ENCODE measurements at regions of chr12 and their contacts with region 1.

Region 1: DNA sequence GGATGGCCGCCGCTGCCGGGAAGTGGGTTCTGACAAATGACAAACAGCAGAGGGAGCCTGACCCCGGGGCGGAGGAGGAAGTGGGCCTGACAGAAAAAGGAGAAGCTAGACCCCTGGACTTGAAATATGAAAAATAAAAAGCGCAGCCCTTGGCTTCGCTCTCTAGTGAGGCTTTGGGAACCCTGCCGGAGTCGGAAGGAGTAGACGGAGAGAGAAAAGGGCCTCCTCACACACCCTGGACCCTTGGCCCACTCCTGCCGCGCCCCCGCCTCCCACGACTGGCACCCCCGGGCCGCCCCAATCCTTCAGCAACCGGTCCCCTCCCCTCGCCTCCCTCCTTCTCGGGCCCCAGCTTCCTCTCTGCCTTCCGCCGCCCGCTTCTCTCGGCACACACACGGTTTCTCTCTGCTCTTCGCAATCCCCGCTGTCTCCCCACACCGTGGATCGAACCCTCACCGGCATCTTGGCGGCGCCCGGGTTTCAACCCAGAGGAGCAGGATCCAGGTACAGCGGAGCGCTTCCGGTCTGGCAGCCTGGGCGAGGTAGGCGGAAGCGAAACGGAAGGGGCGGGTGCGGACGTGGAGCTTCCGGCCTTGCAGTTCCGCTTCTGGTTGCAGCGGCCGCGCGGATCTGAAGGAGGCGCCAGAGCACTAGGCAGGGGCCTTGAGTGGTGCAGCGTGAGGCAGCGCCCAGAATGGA is at the start of gene ARPC3:
- DNase-seq: peak; percentile 92
- ATAC-seq: peak; percentile 98
- H3K4me3 ChIP-seq: peak within 1 kb of the TSS; percentile 74
- H3K27ac ChIP-seq: peak within 1 kb of the TSS; percentile 97
- H3K4me1 ChIP-seq: 0 out of 2 replicates have a peak, but pooled peaks cover 5% of the 10 kb centered on the region
- H3K27me3 ChIP-seq: no peaks in the 10 kb centered on the region
- CTCF ChIP-seq: peak; percentile 97
- POLR2A ChIP-seq: peak; percentile 82
- RAD21 ChIP-seq: peak; percentile 97
- total RNA-seq, gene ARPC3: 204 and 234 TPM in 2 replicates

Region 2: GRCh38 chr12:109497675-109498074 is 952.3 kb before region 1 on chr12:
- CTCF ChIA-PET with region 1: no interaction called
- POLR2A ChIA-PET with region 1: no interaction called
- dilution Hi-C with region 1: no loop called
- in situ Hi-C with region 1: no loop called
- intact Hi-C with region 1: no loop called
- DNase-seq: peak; percentile 79
- ATAC-seq: peak; percentile 67
- H3K4me3 ChIP-seq: no peak overlapping the region
- H3K27ac ChIP-seq: no peak overlapping the region
- H3K4me1 ChIP-seq: no peaks in the 10 kb centered on the region
- H3K27me3 ChIP-seq: no peaks in the 10 kb centered on the region
- CTCF ChIP-seq: no peak
- POLR2A ChIP-seq: no peak
- RAD21 ChIP-seq: no peak

Region 3: GRCh38 chr12:110065540-110065939 is 384.4 kb before region 1 on chr12:
- CTCF ChIA-PET with region 1: no interaction called
- POLR2A ChIA-PET with region 1: interaction called, 13 read pairs
- dilution Hi-C with region 1: no loop called
- in situ Hi-C with region 1: no loop called
- intact Hi-C with region 1: no loop called
- DNase-seq: no peak
- ATAC-seq: no peak
- H3K4me3 ChIP-seq: no peak overlapping the region
- H3K27ac ChIP-seq: no peak overlapping the region
- H3K4me1 ChIP-seq: peaks cover under 1% of the 10 kb centered on the region; the same call in 1 of the 2 replicates
- H3K27me3 ChIP-seq: no peaks in the 10 kb centered on the region
- CTCF ChIP-seq: no peak
- POLR2A ChIP-seq: no peak
- RAD21 ChIP-seq: no peak

Region 4: GRCh38 chr12:110075880-110076279 is 374.1 kb before region 1 on chr12:
- CTCF ChIA-PET with region 1: no interaction called
- POLR2A ChIA-PET with region 1: no interaction called
- dilution Hi-C with region 1: no loop called
- in situ Hi-C with region 1: no loop called
- intact Hi-C with region 1: no loop called
- DNase-seq: no peak
- ATAC-seq: no peak
- H3K4me3 ChIP-seq: no peak overlapping the region
- H3K27ac ChIP-seq: no peak overlapping the region
- H3K4me1 ChIP-seq: 0 out of 2 replicates have a peak, but pooled peaks cover 2% of the 10 kb centered on the region
- H3K27me3 ChIP-seq: no peaks in the 10 kb centered on the region
- CTCF ChIP-seq: no peak
- POLR2A ChIP-seq: no peak
- RAD21 ChIP-seq: no peak

Region 5: DNA sequence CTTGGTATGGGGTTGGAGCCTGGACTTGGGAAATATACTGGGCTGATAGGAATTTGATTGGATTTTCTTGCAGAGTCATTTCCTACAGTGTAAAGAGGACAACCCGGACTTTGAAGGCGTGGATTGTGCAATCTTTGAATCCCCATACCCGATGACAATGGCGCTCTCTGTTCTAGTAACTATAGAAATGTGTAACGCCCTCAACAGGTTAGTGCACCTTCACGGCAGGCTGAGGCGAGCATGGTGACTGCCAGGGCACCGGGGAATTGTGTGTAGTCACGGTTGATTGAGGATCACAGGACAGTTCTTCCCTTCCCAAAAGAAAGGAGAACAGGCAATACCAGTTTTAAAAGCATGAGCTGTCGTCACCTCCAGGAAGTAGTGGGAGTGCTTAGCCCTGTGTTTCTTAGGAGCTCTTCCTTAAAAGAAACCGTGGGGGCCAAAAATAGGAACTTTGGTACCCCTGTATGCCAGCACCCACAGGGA is 104.7 kb before region 1 on chr12:
- CTCF ChIA-PET with region 1: no interaction called
- POLR2A ChIA-PET with region 1: no interaction called
- dilution Hi-C with region 1: no loop called
- in situ Hi-C with region 1: no loop called
- intact Hi-C with region 1: no loop called
- DNase-seq: no peak
- ATAC-seq: no peak
- H3K4me3 ChIP-seq: no peak overlapping the region
- H3K27ac ChIP-seq: no peak overlapping the region
- H3K4me1 ChIP-seq: no peaks in the 10 kb centered on the region
- H3K27me3 ChIP-seq: no peaks in the 10 kb centered on the region
- CTCF ChIP-seq: no peak
- POLR2A ChIP-seq: no peak
- RAD21 ChIP-seq: no peak

Region 6: GRCh38 chr12:110468212-110469048 is 18.5 kb after region 1 on chr12 and contains the starts of genes FAM216A and GPN3:
- CTCF ChIA-PET with region 1: interaction called, 15 read pairs
- POLR2A ChIA-PET with region 1: interaction called, 4 read pairs
- dilution Hi-C with region 1: no loop called
- in situ Hi-C with region 1: no loop called
- intact Hi-C with region 1: loop called (anchors 1 kb)
- DNase-seq: peak; percentile 98
- ATAC-seq: peak; percentile 90
- H3K4me3 ChIP-seq: peak within 1 kb of the TSS; percentile 53
- H3K27ac ChIP-seq: peak within 1 kb of the TSS; percentile 86
- H3K4me1 ChIP-seq: peaks cover 3% of the 10 kb centered on the region; the same call in 1 of the 2 replicates
- H3K27me3 ChIP-seq: no peaks in the 10 kb centered on the region
- CTCF ChIP-seq: no peak
- POLR2A ChIP-seq: peak; percentile 83
- RAD21 ChIP-seq: no peak
- total RNA-seq, gene FAM216A: 14.0 and 18.9 TPM in 2 replicates
- total RNA-seq, gene GPN3: 7.7 and 24.7 TPM in 2 replicates

Region 7: DNA sequence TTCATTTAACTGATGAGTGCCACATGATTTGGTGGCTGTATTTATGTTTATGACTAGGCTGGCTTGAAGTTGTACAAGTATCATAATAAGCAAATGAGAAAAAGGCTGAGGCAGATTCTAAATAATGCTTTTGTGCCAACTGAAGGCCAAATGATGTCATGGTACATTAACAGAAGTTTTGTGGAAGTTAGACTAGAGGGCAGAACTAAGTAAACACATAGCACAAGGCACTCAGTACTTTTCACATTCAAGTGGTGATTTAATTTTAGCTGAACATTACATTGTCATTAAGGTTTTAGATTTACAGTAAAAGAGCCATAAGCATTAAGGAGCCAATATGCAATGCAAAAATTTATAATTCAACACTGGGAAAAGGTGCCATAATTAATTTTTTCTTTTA is 271.6 kb after region 1 on chr12:
- CTCF ChIA-PET with region 1: interaction called, 3 read pairs
- POLR2A ChIA-PET with region 1: no interaction called
- dilution Hi-C with region 1: no loop called
- in situ Hi-C with region 1: no loop called
- intact Hi-C with region 1: loop called (anchors 10 kb)
- DNase-seq: no peak
- ATAC-seq: no peak
- H3K4me3 ChIP-seq: no peak overlapping the region
- H3K27ac ChIP-seq: no peak overlapping the region
- H3K4me1 ChIP-seq: no peaks in the 10 kb centered on the region
- H3K27me3 ChIP-seq: no peaks in the 10 kb centered on the region
- CTCF ChIP-seq: no peak
- POLR2A ChIP-seq: no peak
- RAD21 ChIP-seq: no peak

Region 8: DNA sequence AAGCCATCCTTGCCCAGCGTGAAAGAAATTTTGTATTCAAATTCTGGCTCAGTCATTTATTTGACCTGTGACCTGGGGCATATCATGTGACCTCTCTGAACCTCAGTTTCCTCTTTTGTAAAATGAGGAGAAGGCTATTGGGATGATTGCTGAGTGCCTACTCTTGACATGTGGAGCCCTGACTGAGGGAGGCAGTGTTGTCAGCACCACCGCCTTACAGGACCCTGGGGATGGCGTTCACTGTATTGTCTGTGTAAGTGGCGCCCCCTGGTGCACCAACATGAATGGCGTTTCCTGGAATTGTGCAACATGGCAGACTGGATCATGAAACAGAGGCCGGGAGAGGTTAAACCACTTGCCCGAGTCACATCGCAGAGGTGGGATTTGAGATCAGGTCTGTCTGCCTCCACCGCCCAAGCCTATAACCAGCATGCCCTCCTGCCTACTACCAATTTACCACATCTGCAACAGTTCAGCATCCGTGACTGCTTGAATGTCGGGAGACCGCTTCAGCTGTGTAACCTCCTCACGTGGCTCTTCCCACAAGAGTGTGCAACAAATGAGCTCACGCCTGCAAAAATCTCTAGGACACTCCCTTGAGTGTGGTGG is 376.7 kb after region 1 on chr12:
- CTCF ChIA-PET with region 1: no interaction called
- POLR2A ChIA-PET with region 1: no interaction called
- dilution Hi-C with region 1: no loop called
- in situ Hi-C with region 1: no loop called
- intact Hi-C with region 1: loop called (anchors 1 kb)
- DNase-seq: peak; percentile 72
- ATAC-seq: peak; percentile 93
- H3K4me3 ChIP-seq: no peak overlapping the region
- H3K27ac ChIP-seq: no peak overlapping the region
- H3K4me1 ChIP-seq: no peaks in the 10 kb centered on the region
- H3K27me3 ChIP-seq: peaks cover 9% of the 10 kb centered on the region
- CTCF ChIP-seq: peak; percentile 75
- POLR2A ChIP-seq: no peak
- RAD21 ChIP-seq: peak; percentile 71

Region 9: DNA sequence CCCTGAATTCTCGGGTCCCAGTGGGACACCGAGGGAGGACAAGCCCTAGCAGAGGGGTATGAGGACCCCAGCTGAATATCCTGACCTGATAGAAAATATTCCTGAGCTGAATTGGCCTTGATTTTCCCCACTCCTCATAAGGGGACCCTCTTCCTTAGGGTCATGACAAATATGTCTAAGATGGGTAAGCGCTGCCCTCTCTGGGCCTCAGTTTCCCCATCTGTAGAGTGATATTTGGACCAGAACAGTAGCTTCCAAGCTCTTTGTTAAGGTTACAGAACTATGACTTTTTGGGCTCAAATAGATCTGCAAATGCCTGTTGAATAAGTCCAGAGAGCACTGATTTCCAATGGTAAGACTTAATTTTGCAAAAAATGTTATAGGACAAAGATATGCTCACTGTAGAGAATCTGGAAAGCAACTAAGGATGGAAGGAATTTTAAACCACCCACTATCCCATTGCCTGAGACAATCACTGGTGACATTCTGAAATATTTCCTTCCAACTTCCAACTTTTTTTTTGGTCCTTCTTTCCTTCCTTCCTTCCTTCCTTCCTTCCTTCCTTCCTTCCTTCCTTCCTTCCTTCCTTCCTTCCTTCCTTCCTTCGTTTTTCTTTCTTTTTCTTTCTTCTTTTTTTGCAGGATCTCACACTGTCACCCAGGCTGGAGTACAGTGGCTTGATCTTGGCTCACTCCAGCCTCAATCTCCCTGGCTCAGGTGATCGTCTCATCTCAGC is 438.5 kb after region 1 on chr12:
- CTCF ChIA-PET with region 1: no interaction called
- POLR2A ChIA-PET with region 1: no interaction called
- dilution Hi-C with region 1: no loop called
- in situ Hi-C with region 1: loop called (anchors 10 kb)
- intact Hi-C with region 1: loop called (anchors 1 kb)
- DNase-seq: no peak
- ATAC-seq: no peak
- H3K4me3 ChIP-seq: no peak overlapping the region
- H3K27ac ChIP-seq: no peak overlapping the region
- H3K4me1 ChIP-seq: no peaks in the 10 kb centered on the region
- H3K27me3 ChIP-seq: no peaks in the 10 kb centered on the region
- CTCF ChIP-seq: no peak
- POLR2A ChIP-seq: no peak
- RAD21 ChIP-seq: no peak

Region 10: DNA sequence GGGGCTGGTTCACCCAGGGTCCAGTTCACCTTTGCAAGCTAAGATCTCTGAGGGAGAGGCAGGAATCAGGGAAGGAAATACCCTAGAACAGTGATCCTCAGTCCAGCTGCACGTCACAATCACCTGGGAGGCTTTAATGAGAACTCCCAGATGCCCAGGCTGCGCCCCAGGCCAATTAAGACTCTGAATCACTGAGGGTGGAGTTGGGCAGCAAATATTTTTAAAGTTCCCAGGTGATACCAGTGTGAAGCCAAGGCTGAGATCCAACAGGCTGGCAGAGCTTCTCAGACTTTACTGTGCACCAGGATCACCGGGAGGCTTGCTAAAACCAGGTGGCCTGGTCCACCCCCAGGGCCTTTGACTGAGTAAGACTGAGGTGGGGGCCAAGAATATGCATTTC is 446.6 kb after region 1 on chr12:
- CTCF ChIA-PET with region 1: no interaction called
- POLR2A ChIA-PET with region 1: no interaction called
- dilution Hi-C with region 1: no loop called
- in situ Hi-C with region 1: loop called (anchors 10 kb)
- intact Hi-C with region 1: no loop called
- DNase-seq: no peak
- ATAC-seq: no peak
- H3K4me3 ChIP-seq: no peak overlapping the region
- H3K27ac ChIP-seq: no peak overlapping the region
- H3K4me1 ChIP-seq: no peaks in the 10 kb centered on the region
- H3K27me3 ChIP-seq: peaks cover 3% of the 10 kb centered on the region; the same call in 1 of the 2 replicates
- CTCF ChIP-seq: no peak
- POLR2A ChIP-seq: no peak
- RAD21 ChIP-seq: no peak

Measured in IMR-90 (cell line).